ENCODE measurements at regions of chrX and their contacts with region 1.

Region 1: DNA sequence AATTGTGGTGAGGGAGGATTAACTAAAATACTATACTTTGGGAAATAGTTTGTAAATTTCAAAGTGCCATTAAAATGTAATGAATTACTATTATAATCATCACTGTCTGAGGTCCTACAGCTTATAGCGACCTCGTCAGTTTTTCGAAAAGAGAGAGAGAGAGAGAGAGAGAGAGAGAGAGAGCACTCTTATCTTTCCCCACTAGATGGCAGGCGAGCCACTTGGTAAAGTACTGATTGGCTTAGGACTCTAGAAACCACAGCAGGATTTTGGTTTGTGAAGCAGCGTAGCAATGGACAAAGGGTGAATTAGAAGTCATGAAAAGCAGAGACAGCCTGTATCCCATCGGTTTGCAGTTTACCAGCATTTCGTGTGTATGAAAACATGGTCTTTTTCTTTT is 52.5 kb downstream of the LINC00632 start:
- DNase-seq: no peak
- H3K4me3 ChIP-seq: no peak overlapping the region
- H3K27ac ChIP-seq: no peak overlapping the region
- H3K27me3 ChIP-seq: no peaks in the 10 kb centered on the region
- CTCF ChIP-seq: peak; percentile 90

Region 2: DNA sequence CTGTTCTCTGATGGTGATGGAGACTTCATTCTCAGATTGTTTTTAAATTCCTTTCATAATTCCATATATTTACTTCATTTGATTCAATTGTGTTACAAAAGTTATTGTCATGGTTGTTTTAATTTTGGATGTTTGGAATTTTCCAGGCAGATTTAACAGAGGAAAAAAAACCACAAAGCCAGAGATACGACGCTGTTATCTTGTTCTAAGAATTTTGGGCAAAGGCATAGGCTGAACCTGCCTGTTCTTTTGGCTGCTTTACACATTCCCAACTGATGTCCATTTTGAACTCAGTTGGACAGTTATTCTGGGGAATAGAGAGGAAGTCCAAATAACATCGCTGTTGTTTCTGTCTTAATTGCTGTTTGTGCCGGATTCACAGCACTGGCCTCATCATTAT is 13.2 kb after region 1 on chrX:
- CTCF ChIA-PET with region 1: interaction called, 15 read pairs
- POLR2A ChIA-PET with region 1: no interaction called
- DNase-seq: no peak
- H3K4me3 ChIP-seq: no peak overlapping the region
- H3K27ac ChIP-seq: no peak overlapping the region
- H3K27me3 ChIP-seq: no peaks in the 10 kb centered on the region
- CTCF ChIP-seq: no peak

Region 3: GRCh38 chrX:140794642-140795041 is 32.6 kb after region 1 on chrX:
- CTCF ChIA-PET with region 1: interaction called, 20 read pairs
- POLR2A ChIA-PET with region 1: interaction called, 3 read pairs
- DNase-seq: no peak
- H3K4me3 ChIP-seq: no peak overlapping the region
- H3K27ac ChIP-seq: no peak overlapping the region
- H3K27me3 ChIP-seq: no peaks in the 10 kb centered on the region
- CTCF ChIP-seq: no peak

Region 4: DNA sequence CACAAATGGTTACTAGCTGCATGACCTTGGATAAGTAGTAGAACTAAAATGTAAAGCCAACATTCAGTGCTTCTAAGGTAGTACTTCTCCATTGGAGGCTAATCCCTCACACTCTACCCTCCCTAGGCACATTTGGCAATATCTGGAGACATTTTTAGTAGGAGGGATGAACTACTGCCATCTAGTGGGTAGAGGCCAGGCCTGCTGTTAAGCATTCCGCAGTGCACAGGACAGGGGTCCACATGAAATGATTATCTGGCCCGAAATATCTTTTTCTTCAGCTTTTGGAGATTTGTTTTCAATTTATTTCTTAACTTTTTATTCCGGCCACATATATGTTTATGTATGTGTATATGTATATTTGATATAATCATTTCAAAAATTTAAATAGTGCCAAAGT is 516.2 kb after region 1 on chrX:
- CTCF ChIA-PET with region 1: interaction called, 11 read pairs
- POLR2A ChIA-PET with region 1: no interaction called
- DNase-seq: no peak
- H3K4me3 ChIP-seq: no peak overlapping the region
- H3K27ac ChIP-seq: no peak overlapping the region
- H3K27me3 ChIP-seq: no peaks in the 10 kb centered on the region
- CTCF ChIP-seq: peak; percentile 63